ENCODE measurements at regions of chr9 and their contacts with region 1.

Region 1: DNA sequence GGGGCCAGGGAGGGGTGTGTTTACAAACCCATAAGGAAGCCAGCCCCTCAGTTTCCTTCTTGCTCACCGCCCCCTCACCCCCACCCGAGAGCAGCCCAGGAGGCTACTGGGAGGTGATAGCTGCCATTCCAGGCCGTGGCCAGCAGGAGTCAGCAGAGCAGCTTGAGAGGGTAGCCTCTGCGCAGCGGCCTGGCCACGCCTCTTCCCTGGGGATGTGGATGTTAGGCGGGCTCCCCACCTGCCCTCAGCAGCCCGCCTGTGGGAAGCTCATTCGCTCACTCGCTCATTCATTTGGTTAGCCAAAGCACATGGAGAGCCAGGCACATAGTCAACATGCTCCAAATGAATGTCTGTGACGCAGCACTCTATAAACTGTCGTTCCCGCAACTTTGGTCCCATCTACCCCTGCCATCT is 6.1 kb upstream of the DPM2 start:
- DNase-seq: peak; percentile 79
- H3K27ac ChIP-seq: peak overlapping the region; percentile 32
- CTCF ChIP-seq: peak; percentile 94

Region 2: GRCh38 chr9:127828262-127829031 is 115.3 kb before region 1 on chr9:
- CTCF ChIA-PET with region 1: no interaction called
- POLR2A ChIA-PET with region 1: no interaction called
- DNase-seq: peak; percentile 57
- H3K27ac ChIP-seq: peak overlapping the region; percentile 18
- CTCF ChIP-seq: no peak

Region 3: GRCh38 chr9:127930231-127931091 is 13.3 kb before region 1 on chr9 and contains the start of gene PIP5KL1:
- CTCF ChIA-PET with region 1: interaction called, 15 read pairs
- POLR2A ChIA-PET with region 1: no interaction called
- DNase-seq: peak; percentile 99
- H3K27ac ChIP-seq: peak within 1 kb of the TSS; percentile 75
- CTCF ChIP-seq: no peak

Region 4: GRCh38 chr9:127955294-127956035 is 11.7 kb after region 1 on chr9:
- CTCF ChIA-PET with region 1: interaction called, 31 read pairs
- POLR2A ChIA-PET with region 1: interaction called, 3 read pairs
- DNase-seq: peak; percentile 94
- H3K27ac ChIP-seq: peak overlapping the region; percentile 88
- CTCF ChIP-seq: no peak; the same call in 1 of the 2 replicates

Region 5: DNA sequence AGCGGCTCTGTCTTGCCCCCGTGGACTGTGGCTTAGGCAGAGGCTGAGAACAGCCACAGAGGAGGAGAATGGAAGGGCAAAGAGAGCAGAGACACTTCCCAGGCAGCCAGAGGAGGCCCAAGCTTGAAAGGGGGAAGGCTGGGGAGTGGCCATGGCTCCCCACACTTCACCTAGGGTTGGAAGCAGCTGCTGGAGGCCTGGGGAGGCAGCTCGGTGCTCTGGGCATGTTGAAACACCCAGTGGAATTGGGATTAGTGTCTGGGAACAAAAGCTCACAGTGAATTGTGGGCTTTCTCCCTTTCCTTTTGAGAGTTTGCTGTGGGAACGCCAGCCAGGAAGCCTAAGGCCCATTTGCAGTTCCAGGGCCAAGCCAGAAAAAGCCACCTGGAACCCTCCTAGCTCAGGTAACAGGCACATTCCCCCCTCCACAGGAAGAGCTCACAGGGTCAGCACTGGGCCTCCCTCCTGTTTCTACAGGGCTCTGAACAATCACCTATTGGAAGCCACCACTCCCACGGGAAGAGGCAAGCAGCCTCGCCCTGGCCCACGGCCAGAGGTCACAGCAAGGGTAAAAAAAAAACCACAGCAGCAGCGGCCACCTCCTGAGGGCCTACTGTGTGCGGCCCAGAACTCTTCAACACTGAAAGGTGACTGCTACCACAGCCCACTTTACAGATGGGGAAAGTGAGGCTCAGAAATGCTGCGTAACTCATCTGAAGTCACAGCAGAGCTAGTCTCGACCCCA is 16.8 kb after region 1 on chr9:
- CTCF ChIA-PET with region 1: interaction called, 11 read pairs
- POLR2A ChIA-PET with region 1: no interaction called
- DNase-seq: no peak
- H3K27ac ChIP-seq: peak overlapping the region; percentile 100
- CTCF ChIP-seq: no peak

Region 6: GRCh38 chr9:127970401-127971313 is 26.9 kb after region 1 on chr9:
- CTCF ChIA-PET with region 1: interaction called, 14 read pairs
- POLR2A ChIA-PET with region 1: interaction called, 3 read pairs
- DNase-seq: no peak
- H3K27ac ChIP-seq: peak overlapping the region; percentile 100
- CTCF ChIP-seq: no peak

Region 7: GRCh38 chr9:127977886-127978621 is 34.3 kb after region 1 on chr9:
- CTCF ChIA-PET with region 1: interaction called, 13 read pairs
- POLR2A ChIA-PET with region 1: no interaction called
- DNase-seq: no peak
- H3K27ac ChIP-seq: peak overlapping the region; percentile 100
- CTCF ChIP-seq: no peak

Region 8: GRCh38 chr9:128034821-128035764 is 91.4 kb after region 1 on chr9:
- CTCF ChIA-PET with region 1: interaction called, 68 read pairs
- POLR2A ChIA-PET with region 1: interaction called, 5 read pairs
- DNase-seq: peak; percentile 96
- H3K27ac ChIP-seq: peak overlapping the region; percentile 8; the same call in 1 of the 2 replicates
- CTCF ChIP-seq: peak; percentile 98

Measured in RWPE1 (cell line).